Activated CD8-positive, alpha-beta T cell treated with anti-CD3 and anti-CD28 coated beads, Interleukin-2, amount 10 ng/mL, durations not matched to agents 7 days and 5 days (primary cell): ENCODE measurements at regions of chr12 and their contacts with region 1.

Region 1: DNA sequence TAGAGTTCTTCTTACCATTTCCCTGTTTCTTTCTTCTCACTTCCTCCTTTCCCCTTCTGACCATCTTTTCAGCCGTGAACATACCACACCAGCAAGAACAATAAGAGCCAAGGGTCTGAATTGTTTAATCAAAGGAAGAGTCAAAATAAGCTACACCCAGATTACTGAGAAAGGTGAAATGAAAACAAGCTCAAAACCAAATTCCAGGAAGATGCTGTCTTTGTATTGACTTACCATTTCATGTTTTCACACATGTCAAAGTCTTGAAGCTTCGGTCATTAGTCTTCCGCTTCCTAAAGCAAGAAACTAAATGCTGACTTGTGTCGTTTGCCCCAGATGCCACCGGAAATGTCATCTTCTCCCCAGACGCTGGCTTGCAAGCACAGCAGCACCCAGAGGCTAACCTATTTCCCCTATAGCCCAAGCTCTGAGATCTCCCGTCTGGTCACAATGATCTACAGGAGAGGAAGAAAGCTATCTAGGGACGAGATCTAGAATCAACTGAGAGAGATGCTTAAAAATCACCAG is 136.5 kb upstream of the AMIGO2 start:
- DNase-seq: peak; percentile 92
- ATAC-seq: peak; percentile 54
- H3K4me3 Mint-ChIP-seq: peak overlapping the region; percentile 83
- H3K27ac Mint-ChIP-seq: peak overlapping the region; percentile 93
- H3K4me1 Mint-ChIP-seq: peaks cover 27% of the 10 kb centered on the region
- H3K27me3 Mint-ChIP-seq: no peaks in the 10 kb centered on the region

Region 2: DNA sequence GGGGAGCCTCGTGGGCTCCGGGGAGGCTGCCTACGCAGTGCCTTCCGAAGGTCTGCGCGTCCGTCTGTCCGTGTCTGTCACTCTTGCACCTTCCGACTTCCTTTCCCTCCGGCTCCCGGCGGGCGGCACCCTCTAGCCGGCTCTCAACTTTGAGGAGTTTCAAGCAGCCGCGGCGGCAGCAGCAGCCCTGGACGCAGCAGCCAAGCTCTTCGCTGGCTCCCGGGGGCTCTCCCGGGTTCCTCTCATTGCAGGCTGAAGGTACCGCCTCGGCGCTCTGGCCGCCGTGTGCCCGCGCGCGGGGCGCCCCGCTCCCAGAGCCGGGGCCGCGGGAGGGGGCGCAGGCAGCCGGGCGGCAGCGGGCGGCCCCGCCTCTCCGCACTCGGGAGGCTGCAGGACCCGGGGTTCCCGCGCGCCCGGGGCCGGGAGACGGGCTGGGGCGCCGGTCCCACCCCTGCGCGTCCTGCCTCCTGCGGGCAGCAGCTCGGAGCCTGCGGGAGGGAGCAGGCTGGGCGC is 136.7 kb before region 1 on chr12 and contains the starts of genes AMIGO2 and PCED1B:
- CTCF ChIA-PET with region 1: interaction called, 7 read pairs
- POLR2A ChIA-PET with region 1: interaction called, 30 read pairs
- DNase-seq: peak; percentile 77
- ATAC-seq: peak; percentile 67
- H3K4me3 Mint-ChIP-seq: peak within 1 kb of the TSS; percentile 94
- H3K27ac Mint-ChIP-seq: peak within 1 kb of the TSS; percentile 90
- H3K4me1 Mint-ChIP-seq: peaks cover 62% of the 10 kb centered on the region
- H3K27me3 Mint-ChIP-seq: no peaks in the 10 kb centered on the region
- total RNA-seq, gene AMIGO2: 10.2 TPM
- total RNA-seq, gene PCED1B: 72.1 to 74.2 TPM

Region 3: DNA sequence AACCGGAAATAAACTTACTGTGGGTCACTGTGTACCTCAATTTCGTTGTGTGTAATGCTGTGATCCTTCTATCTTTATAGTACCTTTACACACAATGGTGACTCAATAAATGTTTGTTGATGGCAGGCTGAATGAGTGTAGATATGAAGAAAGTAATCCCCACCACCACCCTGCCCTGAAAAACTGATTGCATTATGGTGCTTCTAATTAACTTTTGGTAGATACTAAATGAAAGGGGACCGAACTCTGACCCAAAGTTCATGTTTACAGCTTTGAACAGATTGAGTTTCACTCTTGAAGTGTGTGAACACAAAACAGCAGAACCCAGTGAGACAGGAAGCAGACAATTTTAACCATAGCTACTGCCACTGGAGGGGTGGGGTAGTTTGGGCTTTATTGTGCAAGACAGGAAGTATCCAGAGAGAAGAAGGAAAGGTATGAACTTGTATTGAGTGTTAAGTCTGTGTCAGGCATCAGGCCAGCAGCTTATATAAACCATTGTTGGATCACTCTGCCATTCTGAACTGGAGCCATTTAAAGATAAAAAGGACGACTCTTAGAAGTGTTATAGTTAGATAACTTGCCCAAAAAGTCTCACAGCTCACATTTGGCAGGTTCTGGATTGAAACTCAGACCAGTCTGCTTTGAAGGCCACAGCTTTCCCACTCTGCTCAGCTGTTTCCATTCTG is 60.6 kb after region 1 on chr12:
- CTCF ChIA-PET with region 1: interaction called, 3 read pairs
- POLR2A ChIA-PET with region 1: interaction called, 22 read pairs
- DNase-seq: peak; percentile 83
- ATAC-seq: peak; percentile 93
- H3K4me3 Mint-ChIP-seq: peak overlapping the region; percentile 73
- H3K27ac Mint-ChIP-seq: peak overlapping the region; percentile 88
- H3K4me1 Mint-ChIP-seq: peaks cover 68% of the 10 kb centered on the region
- H3K27me3 Mint-ChIP-seq: no peaks in the 10 kb centered on the region

Region 4: GRCh38 chr12:47307680-47308399 is 91.6 kb after region 1 on chr12:
- CTCF ChIA-PET with region 1: interaction called, 21 read pairs
- POLR2A ChIA-PET with region 1: interaction called, 26 read pairs
- DNase-seq: peak; percentile 76
- ATAC-seq: peak; percentile 92
- H3K4me3 Mint-ChIP-seq: peak overlapping the region; percentile 64
- H3K27ac Mint-ChIP-seq: peak overlapping the region; percentile 77
- H3K4me1 Mint-ChIP-seq: peaks cover 59% of the 10 kb centered on the region
- H3K27me3 Mint-ChIP-seq: no peaks in the 10 kb centered on the region

Region 5: DNA sequence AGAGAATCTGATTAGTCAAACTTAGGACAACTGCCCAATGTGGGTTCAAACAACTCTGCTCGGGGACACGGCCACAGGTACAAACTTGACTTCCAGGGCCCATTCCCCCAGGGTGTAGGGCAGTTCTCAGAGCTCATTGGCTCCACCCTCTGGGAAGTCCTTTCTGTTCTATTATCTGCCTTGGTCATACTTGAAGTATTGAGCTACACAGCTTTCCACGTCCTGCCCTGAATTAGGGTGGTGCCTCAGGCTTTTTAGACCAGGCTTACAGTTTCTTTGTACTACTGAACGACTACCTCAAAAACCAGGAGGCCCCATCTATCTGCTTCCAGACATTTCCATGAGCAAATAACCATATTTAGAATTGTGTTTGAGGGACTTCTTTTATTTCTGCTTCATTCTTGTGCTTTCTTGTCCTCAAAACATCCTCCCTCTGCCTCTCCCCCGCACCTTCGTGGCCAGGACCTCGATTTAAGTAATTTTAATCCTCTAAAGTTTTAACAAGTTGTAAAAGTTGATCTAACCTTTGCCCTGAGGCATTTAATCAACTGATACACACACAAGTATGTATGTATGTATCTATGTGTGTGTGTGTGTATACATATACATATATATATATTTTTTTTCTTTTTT is 145.3 kb after region 1 on chr12:
- CTCF ChIA-PET with region 1: interaction called, 4 read pairs
- POLR2A ChIA-PET with region 1: interaction called, 129 read pairs
- DNase-seq: peak; percentile 70
- ATAC-seq: peak; percentile 77
- H3K4me3 Mint-ChIP-seq: peak overlapping the region; percentile 75
- H3K27ac Mint-ChIP-seq: peak overlapping the region; percentile 98
- H3K4me1 Mint-ChIP-seq: peaks cover 60% of the 10 kb centered on the region
- H3K27me3 Mint-ChIP-seq: no peaks in the 10 kb centered on the region